Psoas muscle (tissue), 8 donors: ENCODE measurements at regions of chr3 and their contacts with region 1.

Region 1: DNA sequence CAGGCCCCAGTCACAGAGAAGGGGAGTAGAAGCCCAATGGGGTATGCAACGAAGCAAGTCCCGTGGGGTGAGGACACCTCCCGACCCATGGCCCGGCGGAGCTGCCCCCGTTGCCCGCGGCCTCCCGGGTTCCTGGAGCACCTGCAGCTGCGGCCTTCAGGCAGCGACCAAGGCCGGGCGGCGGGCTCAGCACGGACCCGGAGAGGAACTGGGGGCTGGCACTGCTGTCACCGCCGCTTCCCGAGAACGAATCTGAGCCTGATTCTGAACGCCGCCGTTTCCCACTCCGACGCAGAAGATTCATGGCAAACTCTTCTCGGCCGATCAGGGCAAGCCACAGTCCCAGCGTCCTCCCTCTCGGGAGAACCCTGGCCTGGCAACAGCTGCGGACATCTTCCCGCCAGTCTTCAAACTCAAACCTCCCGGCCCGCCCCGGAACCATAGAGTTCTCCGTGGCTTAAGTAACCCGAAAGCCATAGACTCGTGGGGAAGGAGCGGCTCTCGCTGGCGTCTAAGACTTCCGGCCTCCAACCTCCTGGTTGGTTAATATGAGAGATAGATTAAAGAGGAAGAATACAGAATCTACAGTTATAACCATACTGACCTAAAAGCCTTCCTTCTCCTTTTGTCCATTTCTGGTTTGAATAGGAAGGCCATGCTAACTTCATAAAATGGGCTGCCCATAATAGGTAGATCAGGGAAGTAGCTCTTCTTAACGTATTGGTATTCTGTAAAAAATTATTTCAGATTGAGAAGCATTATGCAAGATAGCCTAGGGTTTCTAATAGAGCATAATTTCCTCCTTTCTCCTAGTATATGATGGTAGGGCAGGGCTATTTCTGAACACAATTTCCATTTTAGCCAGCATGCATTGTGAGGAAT is at the start of gene POLQ:
- DNase-seq: peak; percentile 87 to 93
- ATAC-seq: peak; percentile 97 to 99 (median 98)
- H3K4me3 ChIP-seq: peak within 1 kb of the TSS; percentile 75
- H3K27ac ChIP-seq: peak within 1 kb of the TSS; percentile 80
- H3K4me1 ChIP-seq: peaks cover 6% of the 10 kb centered on the region
- H3K27me3 ChIP-seq: no peaks in the 10 kb centered on the region
- CTCF ChIP-seq: no peak
- total RNA-seq, gene POLQ: 0.13 to 0.90 (median 0.50) TPM

Region 2: DNA sequence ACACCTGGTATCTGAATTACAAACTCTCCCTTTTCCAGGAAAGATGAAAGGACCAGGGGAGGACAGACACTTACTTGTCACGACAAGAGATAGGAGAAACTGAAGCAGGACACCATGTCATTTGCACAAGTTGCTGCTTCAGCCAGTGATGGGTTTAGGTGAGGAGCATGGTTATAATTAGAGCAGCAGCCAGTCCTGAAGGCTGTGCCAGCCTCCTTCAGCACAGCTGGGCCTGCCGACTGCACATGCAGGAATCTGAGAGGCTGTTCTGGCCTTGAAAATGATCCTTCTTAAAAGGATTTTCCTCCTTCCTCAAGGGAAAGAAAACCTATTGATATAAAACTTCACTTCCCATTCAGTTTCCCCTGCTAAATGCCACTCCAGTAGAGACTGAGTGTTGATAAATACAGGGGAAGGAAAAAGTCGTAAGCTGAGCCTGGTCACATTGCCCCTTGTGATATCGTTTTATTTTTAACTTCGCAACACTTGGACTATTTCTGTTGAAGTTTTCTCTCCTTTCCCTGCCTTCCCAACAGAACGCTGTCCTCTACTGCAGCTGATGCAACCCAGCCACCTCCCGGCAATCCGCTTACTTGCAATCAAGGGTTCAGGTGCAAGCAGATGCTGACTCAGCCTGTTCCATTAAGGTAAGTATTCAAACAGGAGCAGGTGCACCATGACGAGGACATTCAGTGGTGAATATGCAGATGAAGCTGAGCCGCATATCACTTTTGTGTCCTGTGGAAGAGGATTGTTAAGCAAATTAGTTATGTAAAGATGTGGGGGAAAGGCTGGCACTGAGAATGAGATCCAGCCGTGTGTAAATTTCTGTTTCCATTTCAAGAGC is 47.3 kb after region 1 on chr3 and contains the start of gene FBXO40:
- intact Hi-C with region 1: loop called in 1 of 2 experiments (anchors 5 kb)
- DNase-seq: peak; percentile 31 to 78
- ATAC-seq: peak; percentile 88 to 91 (median 88)
- H3K4me3 ChIP-seq: peak within 1 kb of the TSS; percentile 63
- H3K27ac ChIP-seq: peak within 1 kb of the TSS; percentile 94
- H3K4me1 ChIP-seq: peaks cover 22% of the 10 kb centered on the region
- H3K27me3 ChIP-seq: no peaks in the 10 kb centered on the region
- CTCF ChIP-seq: no peak
- total RNA-seq, gene FBXO40: 33.0 to 152 (median 62.6) TPM

Region 3: GRCh38 chr3:121606106-121606505 is 60.3 kb after region 1 on chr3:
- intact Hi-C with region 1: no loop called
- DNase-seq: no peak
- ATAC-seq: no peak
- H3K4me3 ChIP-seq: no peak overlapping the region
- H3K27ac ChIP-seq: no peak overlapping the region
- H3K4me1 ChIP-seq: peaks cover 21% of the 10 kb centered on the region
- H3K27me3 ChIP-seq: no peaks in the 10 kb centered on the region
- CTCF ChIP-seq: no peak

Region 4: DNA sequence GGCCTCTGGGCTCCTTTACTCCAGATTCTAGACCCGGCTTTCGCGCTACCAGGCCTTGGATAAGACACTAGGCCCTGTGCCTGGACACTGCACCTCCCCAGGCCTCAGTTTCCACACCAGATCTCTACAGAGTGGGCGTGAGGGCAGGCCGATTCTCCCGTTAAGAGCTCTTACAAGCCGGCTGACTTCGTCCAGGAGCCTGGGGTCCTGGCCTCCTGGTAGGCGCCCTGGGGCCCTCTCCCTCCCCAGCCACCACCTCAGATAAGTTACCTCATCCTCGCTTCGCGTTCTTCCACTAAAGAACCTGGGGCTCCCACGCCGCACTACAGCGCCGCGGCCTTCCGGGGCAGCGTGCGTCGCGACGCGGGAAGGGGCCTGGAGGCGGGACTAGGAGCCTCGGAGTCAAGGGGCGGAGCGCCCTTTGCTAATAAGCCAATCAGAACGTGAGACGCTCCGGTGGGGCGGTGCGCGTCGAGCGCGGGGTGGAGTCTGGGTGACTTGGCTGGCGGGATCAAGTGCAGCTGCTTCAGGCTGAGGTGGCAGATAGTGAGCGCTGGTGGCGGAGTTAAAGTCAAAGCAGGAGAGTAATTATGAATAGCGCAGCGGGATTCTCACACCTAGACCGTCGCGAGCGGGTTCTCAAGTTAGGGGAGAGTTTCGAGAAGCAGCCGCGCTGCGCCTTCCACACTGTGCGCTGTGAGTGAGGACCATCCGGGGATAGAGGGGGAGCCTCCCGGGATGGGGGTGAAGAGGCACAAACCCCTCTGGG is 289.1 kb after region 1 on chr3 and contains the starts of genes EAF2 and IQCB1:
- intact Hi-C with region 1: loop called in 1 of 2 experiments (anchors 10 kb)
- DNase-seq: peak; percentile 94 to 98
- ATAC-seq: peak; percentile 100
- H3K4me3 ChIP-seq: peak within 1 kb of the TSS; percentile 89
- H3K27ac ChIP-seq: peak within 1 kb of the TSS; percentile 83
- H3K4me1 ChIP-seq: peaks cover 18% of the 10 kb centered on the region
- H3K27me3 ChIP-seq: no peaks in the 10 kb centered on the region
- CTCF ChIP-seq: peak; percentile 2
- total RNA-seq, gene EAF2: 1.5 to 5.3 (median 5.0) TPM
- total RNA-seq, gene IQCB1: 5.8 to 8.3 (median 6.8) TPM

Region 5: GRCh38 chr3:122258757-122259371 is 713.0 kb after region 1 on chr3:
- intact Hi-C with region 1: loop called (anchors 5 kb)
- DNase-seq: peak; percentile 53 to 71
- ATAC-seq: peak in 3 of 4 donors; percentile 53 to 80 (median 76)
- H3K4me3 ChIP-seq: no peak overlapping the region
- H3K27ac ChIP-seq: no peak overlapping the region
- H3K4me1 ChIP-seq: peaks cover 3% of the 10 kb centered on the region
- H3K27me3 ChIP-seq: no peaks in the 10 kb centered on the region
- CTCF ChIP-seq: peak; percentile 56

Region 6: GRCh38 chr3:122383771-122384697 is 838.2 kb after region 1 on chr3 and contains the start of gene FAM162A:
- intact Hi-C with region 1: loop called in 1 of 2 experiments (anchors 10 kb)
- DNase-seq: peak; percentile 95 to 97
- ATAC-seq: peak; percentile 96 to 98 (median 96)
- H3K4me3 ChIP-seq: peak within 1 kb of the TSS; percentile 81
- H3K27ac ChIP-seq: peak within 1 kb of the TSS; percentile 96
- H3K4me1 ChIP-seq: peaks cover 17% of the 10 kb centered on the region
- H3K27me3 ChIP-seq: no peaks in the 10 kb centered on the region
- CTCF ChIP-seq: peak; percentile 49
- total RNA-seq, gene FAM162A: 42.4 to 98.4 (median 60.0) TPM